Naive thymus-derived CD4-positive, alpha-beta T cell (primary cell): ENCODE measurements at regions of chr2 and their contacts with region 1.

Region 1: GRCh38 chr2:32356735-32357644 is at the start of gene BIRC6:
- DNase-seq: peak; percentile 74 to 96 (median 82)
- ATAC-seq: peak; percentile 92
- H3K4me3 ChIP-seq: peak within 1 kb of the TSS; percentile 77
- H3K4me3 Mint-ChIP-seq: peak within 1 kb of the TSS; percentile 87 to 98 (median 92)
- H3K27ac ChIP-seq: peak within 1 kb of the TSS; percentile 92
- H3K27ac Mint-ChIP-seq: peak within 1 kb of the TSS; percentile 60 to 98 (median 92)
- H3K4me1 ChIP-seq: peaks cover 6 to 21% of the 10 kb centered on the region in 2 donors
- H3K4me1 Mint-ChIP-seq: peaks cover 29 to 44% (median 36%) of the 10 kb centered on the region in 7 donors
- H3K27me3 ChIP-seq: no peaks in the 10 kb centered on the region
- H3K27me3 Mint-ChIP-seq: no peaks in the 10 kb centered on the region
- total RNA-seq, gene BIRC6: 130 to 159 (median 145) TPM

Region 2: GRCh38 chr2:31558401-31559295 is 798.3 kb before region 1 on chr2:
- CTCF ChIA-PET with region 1: no interaction called
- POLR2A ChIA-PET with region 1: no interaction called
- intact Hi-C with region 1: no loop called
- DNase-seq: no peak
- ATAC-seq: no peak
- H3K4me3 ChIP-seq: no peak overlapping the region
- H3K4me3 Mint-ChIP-seq: no peak overlapping the region
- H3K27ac ChIP-seq: no peak overlapping the region
- H3K27ac Mint-ChIP-seq: no peak overlapping the region
- H3K4me1 ChIP-seq: no peaks in the 10 kb centered on the region
- H3K4me1 Mint-ChIP-seq: no peaks in the 10 kb centered on the region
- H3K27me3 ChIP-seq: no peaks in the 10 kb centered on the region
- H3K27me3 Mint-ChIP-seq: peaks cover 0 to 34% (median 26%) of the 10 kb centered on the region in 5 donors

Region 3: DNA sequence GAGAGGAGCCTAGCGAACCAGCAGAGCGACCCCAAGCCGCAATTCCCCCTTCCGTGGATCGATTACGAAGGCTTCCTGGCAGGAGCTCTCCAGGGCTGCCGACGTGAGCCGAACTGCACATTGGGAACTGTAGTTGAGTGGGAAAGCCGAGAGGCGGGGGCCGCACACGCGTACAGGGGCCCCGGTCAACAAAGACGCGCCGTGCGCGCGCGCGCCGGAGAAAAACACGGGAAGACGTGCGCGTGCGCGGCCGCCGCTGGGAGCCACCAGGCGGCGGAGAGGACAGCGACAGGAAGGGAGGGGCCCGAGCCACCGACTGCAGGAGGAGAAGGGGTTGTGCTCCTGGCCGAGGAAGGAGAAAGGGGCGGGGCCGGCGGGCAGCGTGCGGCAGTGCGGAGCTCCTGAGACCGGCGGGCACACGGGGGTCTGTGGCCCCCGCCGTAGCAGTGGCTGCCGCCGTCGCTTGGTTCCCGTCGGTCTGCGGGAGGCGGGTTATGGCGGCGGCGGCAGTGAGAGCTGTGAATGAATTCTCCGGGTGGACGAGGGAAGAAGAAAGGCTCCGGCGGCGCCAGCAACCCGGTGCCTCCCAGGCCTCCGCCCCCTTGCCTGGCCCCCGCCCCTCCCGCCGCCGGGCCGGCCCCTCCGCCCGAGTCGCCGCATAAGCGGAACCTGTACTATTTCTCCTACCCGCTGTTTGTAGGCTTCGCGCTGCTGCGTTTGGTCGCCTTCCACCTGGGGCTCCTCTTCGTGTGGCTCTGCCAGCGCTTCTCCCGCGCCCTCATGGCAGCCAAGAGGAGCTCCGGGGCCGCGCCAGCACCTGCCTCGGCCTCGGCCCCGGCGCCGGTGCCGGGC is 293.5 kb before region 1 on chr2 and contains the start of gene SPAST:
- CTCF ChIA-PET with region 1: no interaction called
- POLR2A ChIA-PET with region 1: interaction called, 3 read pairs
- intact Hi-C with region 1: loop called (anchors 1 kb)
- DNase-seq: peak; percentile 92 to 97 (median 95)
- ATAC-seq: peak; percentile 93
- H3K4me3 ChIP-seq: peak within 1 kb of the TSS; percentile 99
- H3K4me3 Mint-ChIP-seq: peak within 1 kb of the TSS; percentile 91 to 100 (median 98)
- H3K27ac ChIP-seq: peak within 1 kb of the TSS; percentile 88
- H3K27ac Mint-ChIP-seq: peak within 1 kb of the TSS; percentile 88 to 97 (median 92)
- H3K4me1 ChIP-seq: peaks cover 5 to 15% of the 10 kb centered on the region in 2 donors
- H3K4me1 Mint-ChIP-seq: peaks cover 22 to 46% (median 37%) of the 10 kb centered on the region in 7 donors
- H3K27me3 ChIP-seq: no peaks in the 10 kb centered on the region
- H3K27me3 Mint-ChIP-seq: peaks cover 0 to 1% (median 0%) of the 10 kb centered on the region in 5 donors
- total RNA-seq, gene SPAST: 16.3 to 21.0 (median 20.3) TPM

Region 4: GRCh38 chr2:32168513-32168912 is 188.5 kb before region 1 on chr2:
- CTCF ChIA-PET with region 1: no interaction called
- POLR2A ChIA-PET with region 1: interaction called, 3 read pairs
- intact Hi-C with region 1: loop called (anchors 1 to 2 kb)
- DNase-seq: no peak
- ATAC-seq: no peak
- H3K4me3 ChIP-seq: no peak overlapping the region
- H3K4me3 Mint-ChIP-seq: no peak overlapping the region
- H3K27ac ChIP-seq: no peak overlapping the region
- H3K27ac Mint-ChIP-seq: peak overlapping the region in 4 of 9 donors; percentile 2 to 25 (median 10)
- H3K4me1 ChIP-seq: no peaks in the 10 kb centered on the region
- H3K4me1 Mint-ChIP-seq: peaks cover 17 to 61% (median 49%) of the 10 kb centered on the region in 7 donors
- H3K27me3 ChIP-seq: no peaks in the 10 kb centered on the region
- H3K27me3 Mint-ChIP-seq: no peaks in the 10 kb centered on the region

Region 5: DNA sequence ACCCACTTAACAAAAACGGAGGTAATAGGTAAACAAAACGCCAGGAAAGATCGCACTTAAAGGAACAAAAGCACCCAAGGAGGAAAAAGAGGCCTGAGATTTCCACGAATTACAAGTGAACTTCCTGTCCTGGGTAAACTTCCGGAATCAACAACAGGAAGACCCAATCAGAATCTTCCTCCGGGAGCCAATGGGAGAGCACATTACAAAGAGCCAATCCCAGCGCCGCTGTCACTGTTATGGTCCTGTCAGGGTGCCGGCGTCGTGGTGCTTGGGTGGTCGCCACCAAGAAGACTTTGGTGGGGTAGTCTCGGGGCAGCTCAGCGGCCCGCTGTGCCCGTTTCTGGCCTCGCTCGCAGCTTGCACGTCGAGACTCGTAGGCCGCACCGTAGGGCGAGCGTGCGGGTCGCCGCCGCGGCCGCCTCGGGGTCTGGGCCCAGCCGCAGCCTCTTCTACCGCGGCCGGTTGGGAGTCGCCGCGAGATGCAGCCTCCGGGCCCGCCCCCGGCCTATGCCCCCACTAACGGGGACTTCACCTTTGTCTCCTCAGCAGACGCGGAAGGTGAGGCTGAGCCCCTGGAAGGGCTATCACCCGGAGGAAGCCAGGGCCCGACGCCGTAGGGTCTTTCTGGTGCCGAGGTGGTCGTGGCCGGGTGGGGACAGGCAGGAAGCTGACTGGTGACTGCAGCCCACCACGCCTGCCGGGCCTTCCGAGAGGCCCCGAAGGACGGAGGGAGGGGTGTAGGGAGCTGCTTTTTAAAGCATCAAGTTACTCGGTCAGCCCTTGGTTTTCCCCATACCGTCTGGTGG is 79.1 kb before region 1 on chr2 and contains the start of gene YIPF4:
- CTCF ChIA-PET with region 1: no interaction called
- POLR2A ChIA-PET with region 1: interaction called, 4 read pairs
- intact Hi-C with region 1: loop called (anchors 1 kb)
- DNase-seq: peak; percentile 84 to 92 (median 88)
- ATAC-seq: peak; percentile 99
- H3K4me3 ChIP-seq: peak within 1 kb of the TSS; percentile 67
- H3K4me3 Mint-ChIP-seq: peak within 1 kb of the TSS; percentile 82 to 100 (median 94)
- H3K27ac ChIP-seq: peak within 1 kb of the TSS; percentile 84
- H3K27ac Mint-ChIP-seq: peak within 1 kb of the TSS; percentile 91 to 100 (median 98)
- H3K4me1 ChIP-seq: peaks cover under 1 to 6% of the 10 kb centered on the region in 2 donors
- H3K4me1 Mint-ChIP-seq: peaks cover 10 to 46% (median 33%) of the 10 kb centered on the region in 7 donors
- H3K27me3 ChIP-seq: no peaks in the 10 kb centered on the region
- H3K27me3 Mint-ChIP-seq: peaks cover 0 to 6% (median 0%) of the 10 kb centered on the region in 5 donors
- total RNA-seq, gene YIPF4: 21.0 to 43.5 (median 30.5) TPM

Region 6: DNA sequence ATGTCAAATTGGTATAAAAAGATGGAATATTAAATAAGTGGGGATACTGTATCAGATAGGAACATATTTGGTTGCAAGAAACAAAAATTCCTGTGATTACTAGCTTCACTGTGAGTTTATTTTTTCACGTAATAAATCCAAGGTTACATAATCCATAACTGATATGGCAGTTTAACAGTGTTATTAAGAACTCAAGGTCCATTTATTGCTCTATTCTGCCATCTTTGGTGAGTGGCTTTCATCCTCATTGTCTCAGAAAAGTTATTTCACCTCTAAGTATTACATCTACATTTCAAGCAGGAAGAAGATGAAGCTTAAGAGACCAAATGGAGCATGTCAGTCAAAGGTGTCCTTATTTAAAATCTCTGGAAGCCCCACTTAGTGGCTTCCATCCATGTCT is 42.1 kb before region 1 on chr2:
- CTCF ChIA-PET with region 1: no interaction called
- POLR2A ChIA-PET with region 1: interaction called, 3 read pairs
- intact Hi-C with region 1: loop called in 1 of 2 experiments (anchors 5 kb)
- DNase-seq: no peak
- ATAC-seq: no peak
- H3K4me3 ChIP-seq: no peak overlapping the region
- H3K4me3 Mint-ChIP-seq: no peak overlapping the region
- H3K27ac ChIP-seq: no peak overlapping the region
- H3K27ac Mint-ChIP-seq: no peak overlapping the region
- H3K4me1 ChIP-seq: no peaks in the 10 kb centered on the region
- H3K4me1 Mint-ChIP-seq: no peaks in the 10 kb centered on the region
- H3K27me3 ChIP-seq: no peaks in the 10 kb centered on the region
- H3K27me3 Mint-ChIP-seq: no peaks in the 10 kb centered on the region

Region 7: DNA sequence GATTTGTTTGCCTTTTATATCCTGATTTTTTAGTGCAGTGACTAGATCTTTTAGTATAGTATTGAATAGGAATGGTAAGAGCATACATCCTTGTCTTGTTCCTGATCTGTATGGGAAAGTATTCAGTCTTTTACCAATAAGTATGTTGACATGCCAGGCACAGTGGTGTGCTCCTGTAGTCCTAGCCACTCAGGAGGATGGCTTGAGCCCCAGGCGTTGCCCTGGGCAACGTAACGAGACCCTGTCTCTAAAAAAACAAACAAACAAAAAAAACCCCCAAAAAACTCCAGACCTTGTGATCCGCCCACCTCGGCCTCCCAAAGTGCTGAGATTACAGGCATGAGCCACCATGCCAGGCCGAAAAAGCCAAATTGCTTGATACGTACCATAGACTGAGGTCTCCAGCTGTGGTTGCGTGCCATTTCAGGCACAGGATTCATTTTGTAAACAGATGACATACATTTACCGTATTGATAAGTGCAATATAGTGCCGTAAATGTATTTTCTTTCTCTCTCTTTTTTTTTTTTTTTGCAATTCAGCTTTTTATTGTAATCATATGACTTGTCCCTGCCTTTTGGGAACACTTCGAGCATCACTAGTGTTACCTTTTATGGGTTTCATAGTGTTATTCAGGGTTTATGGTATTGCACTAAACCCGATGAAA is 18.4 kb after region 1 on chr2:
- CTCF ChIA-PET with region 1: no interaction called
- POLR2A ChIA-PET with region 1: no interaction called
- intact Hi-C with region 1: loop called in 1 of 2 experiments (anchors 2 kb)
- DNase-seq: no peak
- ATAC-seq: no peak
- H3K4me3 ChIP-seq: no peak overlapping the region
- H3K4me3 Mint-ChIP-seq: peak overlapping the region in 4 of 10 donors; percentile 8 to 58 (median 32)
- H3K27ac ChIP-seq: no peak overlapping the region
- H3K27ac Mint-ChIP-seq: peak overlapping the region in 5 of 9 donors; percentile 28 to 62 (median 45)
- H3K4me1 ChIP-seq: peaks cover 11 to 14% of the 10 kb centered on the region in 2 donors
- H3K4me1 Mint-ChIP-seq: peaks cover 32 to 82% (median 73%) of the 10 kb centered on the region in 7 donors
- H3K27me3 ChIP-seq: no peaks in the 10 kb centered on the region
- H3K27me3 Mint-ChIP-seq: no peaks in the 10 kb centered on the region